ENCODE measurements at regions of chr11 and their contacts with region 1.

Region 1: GRCh38 chr11:34174412-34175041 is 69.1 kb downstream of the NAT10 start:
- DNase-seq: peak; percentile 68 to 80 (median 77)
- H3K4me3 ChIP-seq: peak overlapping the region in 4 of 7 experiments; percentile 23 to 63 (median 46)
- H3K27ac ChIP-seq: no peak overlapping the region
- H3K4me1 ChIP-seq: peaks cover 0 to 21% (median 8%) of the 10 kb centered on the region in 4 experiments
- H3K27me3 ChIP-seq: no peaks in the 10 kb centered on the region

Region 2: DNA sequence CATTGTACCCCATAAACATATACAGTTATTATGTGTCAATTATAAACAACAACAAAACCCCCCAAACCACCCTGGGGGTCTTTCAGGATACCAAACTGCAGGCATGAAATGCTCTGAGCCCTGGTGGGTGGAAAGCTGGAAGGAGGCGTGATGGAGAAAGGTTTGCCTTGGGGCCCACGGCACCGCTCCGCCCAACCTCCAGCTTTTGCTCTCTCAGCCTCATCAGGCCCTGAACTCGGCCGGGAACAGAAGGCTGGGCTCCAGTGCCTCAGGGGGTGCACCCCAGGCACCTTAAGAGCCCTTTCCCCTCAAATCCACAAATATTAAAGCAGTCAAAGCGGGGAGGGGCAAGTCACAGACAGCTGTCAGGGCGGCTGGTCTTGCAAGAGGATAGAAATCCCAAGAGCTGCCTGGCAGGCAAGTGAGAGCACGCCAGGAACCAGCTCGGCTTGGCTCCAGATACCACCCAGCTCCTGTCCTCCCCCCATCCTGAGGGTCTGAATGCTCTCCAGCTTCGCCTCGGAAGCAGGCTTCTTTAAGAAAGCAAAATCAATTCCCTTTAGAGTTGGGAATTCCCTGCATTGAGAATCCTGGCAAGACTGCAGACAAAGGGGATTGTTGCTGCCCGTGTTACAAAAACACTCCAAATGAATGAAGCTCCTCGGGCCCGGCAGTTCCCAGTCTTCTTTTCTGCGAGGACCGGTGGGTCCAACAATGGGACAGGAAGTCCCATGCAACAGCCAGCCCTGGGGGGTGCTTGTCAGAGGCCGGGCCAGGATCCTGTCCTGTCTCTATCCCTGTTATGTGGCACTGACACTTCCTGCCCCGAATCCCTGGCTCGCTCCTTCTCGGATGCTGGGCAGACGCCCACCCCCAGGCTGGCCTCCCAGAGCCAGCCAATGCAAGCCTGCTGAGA is 11.7 kb after region 1 on chr11:
- CTCF ChIA-PET with region 1: interaction called, 30 read pairs
- POLR2A ChIA-PET with region 1: no interaction called
- DNase-seq: no peak
- H3K4me3 ChIP-seq: no peak overlapping the region
- H3K27ac ChIP-seq: no peak overlapping the region
- H3K4me1 ChIP-seq: peaks cover 0 to 6% (median 0%) of the 10 kb centered on the region in 4 experiments
- H3K27me3 ChIP-seq: no peaks in the 10 kb centered on the region

Region 3: DNA sequence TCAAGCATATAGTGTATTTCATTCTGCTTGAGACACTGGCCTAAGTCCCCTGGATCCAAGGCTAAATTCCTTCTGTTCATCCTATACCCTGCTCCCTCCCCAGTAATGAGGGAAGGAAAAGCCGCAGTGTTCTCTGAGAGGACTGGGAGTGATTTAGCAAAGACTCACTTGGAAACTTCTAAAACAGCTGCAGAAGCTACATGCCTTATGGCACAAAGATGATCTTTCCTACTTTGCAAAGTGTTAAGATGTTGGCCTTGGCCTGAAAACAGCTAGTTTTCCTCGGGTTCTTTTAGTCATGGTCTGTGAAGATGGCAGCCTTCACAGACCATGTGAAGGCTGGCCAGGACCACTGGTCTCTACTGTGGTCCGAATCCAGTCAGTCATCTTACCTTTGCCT is 117.6 kb after region 1 on chr11:
- CTCF ChIA-PET with region 1: no interaction called
- POLR2A ChIA-PET with region 1: no interaction called
- DNase-seq: no peak
- H3K4me3 ChIP-seq: no peak overlapping the region
- H3K27ac ChIP-seq: no peak overlapping the region
- H3K4me1 ChIP-seq: no peaks in the 10 kb centered on the region
- H3K27me3 ChIP-seq: peaks cover 0 to 2% (median 0%) of the 10 kb centered on the region in 5 experiments

Region 4: DNA sequence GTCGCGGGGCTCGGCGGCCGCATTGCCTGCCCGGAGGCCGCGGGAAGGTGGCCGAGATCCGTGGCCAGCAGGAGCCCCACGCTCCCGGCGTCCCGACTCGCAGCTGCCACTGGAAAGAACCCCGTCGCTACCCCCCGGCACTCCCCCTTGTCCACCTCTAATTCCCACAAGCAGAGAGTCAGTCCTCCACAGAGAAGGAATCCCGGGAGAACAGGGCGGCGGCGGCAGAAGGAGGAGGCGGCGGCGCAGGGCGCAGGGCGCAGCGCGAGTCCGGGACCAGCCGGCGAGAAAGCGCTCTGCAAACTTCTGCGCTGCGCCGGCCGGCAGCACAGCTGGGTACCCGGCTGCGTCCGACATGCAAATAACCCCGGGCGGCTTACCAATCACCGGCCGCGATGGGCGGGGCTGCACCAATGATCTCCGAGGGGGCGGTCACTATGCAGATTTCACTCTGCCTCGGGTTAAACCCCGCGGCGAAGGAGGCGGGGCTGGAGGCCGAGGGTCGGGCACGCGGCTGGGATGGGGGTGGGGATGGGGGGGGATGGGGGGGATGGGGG is 183.3 kb after region 1 on chr11 and contains the start of gene ABTB2:
- CTCF ChIA-PET with region 1: interaction called, 89 read pairs
- POLR2A ChIA-PET with region 1: interaction called, 3 read pairs
- DNase-seq: peak; percentile 95 to 98 (median 98)
- H3K4me3 ChIP-seq: peak within 1 kb of the TSS; percentile 22 to 90 (median 74)
- H3K27ac ChIP-seq: no peak within 1 kb of the TSS
- H3K4me1 ChIP-seq: peaks cover 3 to 40% (median 32%) of the 10 kb centered on the region in 4 experiments
- H3K27me3 ChIP-seq: peaks cover 0 to 38% (median 16%) of the 10 kb centered on the region in 5 experiments

Region 5: GRCh38 chr11:34366522-34366921 is 192.0 kb after region 1 on chr11:
- CTCF ChIA-PET with region 1: interaction called, 32 read pairs
- POLR2A ChIA-PET with region 1: no interaction called
- DNase-seq: peak; percentile 58 to 69 (median 63)
- H3K4me3 ChIP-seq: no peak overlapping the region
- H3K27ac ChIP-seq: no peak overlapping the region
- H3K4me1 ChIP-seq: peaks cover 0 to 18% (median 0%) of the 10 kb centered on the region in 4 experiments
- H3K27me3 ChIP-seq: no peaks in the 10 kb centered on the region

Region 6: DNA sequence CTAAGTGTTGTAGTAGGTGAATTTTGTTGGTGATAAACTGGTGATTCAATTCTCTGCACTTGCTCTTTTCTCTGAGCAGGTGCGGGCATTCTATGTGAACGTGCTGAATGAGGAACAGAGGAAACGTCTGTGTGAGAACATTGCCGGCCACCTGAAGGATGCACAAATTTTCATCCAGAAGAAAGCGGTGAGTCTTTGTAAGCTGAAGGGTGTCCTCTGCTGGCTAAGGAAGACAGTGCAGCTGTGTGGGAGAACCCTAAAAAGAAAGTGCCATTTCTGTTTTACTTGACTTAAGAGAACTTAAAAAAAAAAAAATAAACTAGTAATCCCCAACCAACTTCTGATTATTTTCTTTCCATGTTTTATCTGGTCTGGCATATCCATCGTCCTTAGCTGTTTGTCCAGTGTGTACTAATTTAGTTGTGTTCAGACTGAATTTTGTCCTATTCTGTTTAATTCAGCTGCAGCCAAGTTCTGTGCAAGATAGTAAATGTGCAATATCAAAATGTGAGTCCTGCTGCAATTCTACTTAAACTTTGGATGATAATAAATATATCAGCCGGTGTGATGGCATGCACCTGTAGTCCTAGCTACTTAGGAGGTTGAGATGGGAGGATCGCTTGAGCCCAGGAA is 293.8 kb after region 1 on chr11:
- CTCF ChIA-PET with region 1: interaction called, 18 read pairs
- POLR2A ChIA-PET with region 1: no interaction called
- DNase-seq: peak; percentile 58 to 84 (median 83)
- H3K4me3 ChIP-seq: no peak overlapping the region
- H3K27ac ChIP-seq: no peak overlapping the region
- H3K4me1 ChIP-seq: peaks cover 0 to 7% (median 0%) of the 10 kb centered on the region in 4 experiments
- H3K27me3 ChIP-seq: no peaks in the 10 kb centered on the region

Measured in common myeloid progenitor, CD34-positive (primary cell).